Upper lobe of right lung (tissue), 1 donor: ENCODE measurements at regions of chr2 and their contacts with region 1.

Region 1: DNA sequence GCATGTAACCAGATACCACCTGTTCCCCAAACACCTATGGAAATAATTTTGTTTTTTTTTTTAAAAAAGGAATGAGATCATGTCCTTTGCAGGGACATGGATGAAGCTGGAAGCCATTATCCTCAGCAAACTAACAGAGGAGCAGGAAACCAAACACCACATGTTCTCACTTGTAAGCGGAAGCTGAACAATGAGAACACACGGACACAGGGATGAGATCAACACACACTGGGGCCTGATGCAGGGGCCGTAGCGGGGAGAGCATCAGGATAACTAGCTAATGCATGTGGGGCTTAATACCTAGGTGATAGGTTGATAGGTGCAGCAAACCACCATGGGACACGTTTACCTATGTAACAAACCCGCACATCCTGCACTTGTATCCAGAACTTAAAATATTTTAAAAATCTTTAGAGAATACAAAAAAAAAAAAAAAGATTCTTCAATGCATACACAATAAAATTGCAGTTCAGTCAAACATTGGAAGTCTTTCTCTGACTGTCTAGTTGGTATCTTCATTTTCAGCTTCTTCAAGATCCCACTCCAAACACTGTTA is 11.6 kb upstream of the CASP10 start:
- DNase-seq: no peak
- ATAC-seq: no peak
- H3K4me3 ChIP-seq: no peak overlapping the region
- H3K27ac ChIP-seq: no peak overlapping the region
- H3K4me1 ChIP-seq: no peaks in the 10 kb centered on the region
- H3K27me3 ChIP-seq: no peaks in the 10 kb centered on the region
- CTCF ChIP-seq: no peak

Region 2: DNA sequence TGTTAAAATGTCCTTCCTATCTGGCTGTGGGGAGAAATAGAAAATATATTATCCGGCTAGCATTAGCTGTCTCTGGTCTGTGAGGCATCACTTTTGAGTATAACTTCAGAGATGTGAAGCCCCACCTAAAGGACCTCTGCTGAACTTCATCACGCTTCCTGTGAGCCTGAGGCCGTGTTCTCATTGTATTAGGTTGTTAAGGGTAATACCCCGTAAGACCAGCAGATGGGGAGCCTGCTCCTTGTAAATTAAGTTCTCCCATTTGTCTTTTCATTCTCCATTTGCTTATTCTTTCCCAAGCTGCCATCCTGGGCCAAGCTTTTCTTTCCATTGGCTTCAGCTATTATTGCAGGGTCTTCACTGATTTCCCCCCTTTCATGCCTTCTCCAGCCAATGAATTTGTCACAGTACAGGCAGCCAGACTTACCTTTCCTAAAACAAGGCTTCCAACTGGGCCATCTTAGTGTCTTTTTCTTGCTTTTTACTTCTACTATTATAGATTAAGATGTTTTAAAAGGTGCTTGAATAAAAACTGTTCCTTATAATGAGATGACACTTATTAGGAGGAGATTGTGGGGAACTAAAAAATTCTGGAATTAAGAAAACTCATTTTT is 269.8 kb before region 1 on chr2:
- intact Hi-C with region 1: loop called (anchors 10 kb)
- DNase-seq: no peak
- ATAC-seq: peak; percentile 96
- H3K4me3 ChIP-seq: no peak overlapping the region
- H3K27ac ChIP-seq: no peak overlapping the region
- H3K4me1 ChIP-seq: no peaks in the 10 kb centered on the region
- H3K27me3 ChIP-seq: no peaks in the 10 kb centered on the region
- CTCF ChIP-seq: peak; percentile 79